Heart left ventricle (tissue), 16 donors: ENCODE measurements at regions of chr4 and their contacts with region 1.

Region 1: DNA sequence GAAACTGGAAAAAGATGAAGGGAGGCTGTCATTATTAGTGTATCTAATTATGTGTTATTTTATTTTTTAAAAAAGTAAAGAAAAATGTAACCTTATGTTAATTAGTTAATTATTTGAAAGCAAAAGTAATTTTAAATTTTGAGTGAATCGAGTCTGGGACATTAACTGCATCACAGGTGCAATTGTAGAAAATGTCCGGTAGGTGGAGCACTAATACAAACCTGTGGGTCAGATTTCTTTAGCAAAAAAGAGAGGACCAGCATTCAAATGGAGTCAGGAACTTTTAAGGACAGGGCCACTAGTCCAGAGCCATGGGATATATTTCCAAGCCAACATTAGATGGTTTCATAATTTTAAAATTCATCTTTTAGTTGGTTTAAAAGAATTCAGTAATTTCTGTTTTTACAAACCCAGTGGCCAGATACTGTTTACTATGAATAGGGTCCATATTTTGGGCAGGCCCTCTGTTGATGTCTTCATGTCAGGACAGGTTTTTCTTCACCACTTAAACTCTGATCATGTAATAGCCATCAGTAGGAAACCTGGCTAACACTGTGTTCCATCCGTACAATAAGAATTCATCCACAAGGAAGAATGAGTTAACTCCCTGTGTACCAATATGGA is 27.2 kb downstream of the BST1 start:
- DNase-seq: peak in 1 of 5 donors; percentile 13
- ATAC-seq: peak in 3 of 4 donors; percentile 36 to 53 (median 51)
- H3K4me3 ChIP-seq: no peak overlapping the region
- H3K27ac ChIP-seq: no peak overlapping the region
- H3K4me1 ChIP-seq: peaks cover 0 to 4% (median 0%) of the 10 kb centered on the region in 12 donors
- H3K27me3 ChIP-seq: no peaks in the 10 kb centered on the region
- CTCF ChIP-seq: peak; percentile 79 to 93 (median 87)
- POLR2A ChIP-seq: no peak

Region 2: DNA sequence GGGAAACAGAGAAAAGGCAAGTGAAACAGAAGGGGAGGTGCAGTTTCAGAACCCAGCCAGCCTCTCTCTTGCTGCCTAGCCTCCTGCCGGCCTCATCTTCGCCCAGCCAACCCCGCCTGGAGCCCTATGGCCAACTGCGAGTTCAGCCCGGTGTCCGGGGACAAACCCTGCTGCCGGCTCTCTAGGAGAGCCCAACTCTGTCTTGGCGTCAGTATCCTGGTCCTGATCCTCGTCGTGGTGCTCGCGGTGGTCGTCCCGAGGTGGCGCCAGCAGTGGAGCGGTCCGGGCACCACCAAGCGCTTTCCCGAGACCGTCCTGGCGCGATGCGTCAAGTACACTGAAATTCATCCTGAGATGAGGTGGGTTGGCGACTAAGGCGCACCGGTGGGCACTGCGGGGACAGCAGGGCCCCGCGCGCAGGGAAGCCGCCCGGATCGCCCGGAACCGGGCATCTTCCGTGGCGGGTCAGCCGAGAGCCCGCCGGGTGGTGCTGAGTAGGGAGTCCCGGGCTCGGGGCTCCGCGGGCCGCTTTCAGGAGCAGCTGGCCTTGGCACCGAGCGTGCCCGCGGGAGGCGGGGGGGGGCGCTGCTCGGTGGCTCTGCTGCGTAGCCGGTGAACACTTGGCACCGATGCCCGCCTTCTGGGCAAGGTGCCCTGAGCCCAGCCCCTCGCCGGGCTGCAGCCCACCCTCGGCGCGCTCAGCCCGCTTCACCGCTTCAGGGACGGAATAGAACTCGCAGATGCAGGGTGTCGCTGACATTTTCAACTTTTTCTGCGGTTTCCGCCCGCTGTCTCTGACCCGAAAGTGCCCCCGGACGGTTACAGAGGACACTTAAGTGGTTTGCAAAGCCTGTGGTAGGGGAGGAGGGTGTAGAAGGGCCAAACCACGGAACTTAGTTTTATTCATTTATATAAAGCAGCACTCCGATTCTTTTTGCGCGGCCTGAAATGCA is 48.5 kb after region 1 on chr4 and contains the start of gene CD38:
- intact Hi-C with region 1: loop called in 1 of 10 experiments (anchors 2 kb)
- DNase-seq: peak; percentile 25 to 79 (median 46)
- ATAC-seq: peak in 3 of 4 donors; percentile 66 to 80 (median 78)
- H3K4me3 ChIP-seq: peak within 1 kb of the TSS; percentile 54 to 90 (median 62)
- H3K27ac ChIP-seq: peak within 1 kb of the TSS; percentile 17 to 79 (median 62)
- H3K4me1 ChIP-seq: peaks cover 0 to 40% (median 7%) of the 10 kb centered on the region in 12 donors
- H3K27me3 ChIP-seq: no peaks in the 10 kb centered on the region
- CTCF ChIP-seq: no peak
- POLR2A ChIP-seq: no peak
- total RNA-seq, gene CD38: 1.0 to 12.4 (median 3.0) TPM

Region 3: DNA sequence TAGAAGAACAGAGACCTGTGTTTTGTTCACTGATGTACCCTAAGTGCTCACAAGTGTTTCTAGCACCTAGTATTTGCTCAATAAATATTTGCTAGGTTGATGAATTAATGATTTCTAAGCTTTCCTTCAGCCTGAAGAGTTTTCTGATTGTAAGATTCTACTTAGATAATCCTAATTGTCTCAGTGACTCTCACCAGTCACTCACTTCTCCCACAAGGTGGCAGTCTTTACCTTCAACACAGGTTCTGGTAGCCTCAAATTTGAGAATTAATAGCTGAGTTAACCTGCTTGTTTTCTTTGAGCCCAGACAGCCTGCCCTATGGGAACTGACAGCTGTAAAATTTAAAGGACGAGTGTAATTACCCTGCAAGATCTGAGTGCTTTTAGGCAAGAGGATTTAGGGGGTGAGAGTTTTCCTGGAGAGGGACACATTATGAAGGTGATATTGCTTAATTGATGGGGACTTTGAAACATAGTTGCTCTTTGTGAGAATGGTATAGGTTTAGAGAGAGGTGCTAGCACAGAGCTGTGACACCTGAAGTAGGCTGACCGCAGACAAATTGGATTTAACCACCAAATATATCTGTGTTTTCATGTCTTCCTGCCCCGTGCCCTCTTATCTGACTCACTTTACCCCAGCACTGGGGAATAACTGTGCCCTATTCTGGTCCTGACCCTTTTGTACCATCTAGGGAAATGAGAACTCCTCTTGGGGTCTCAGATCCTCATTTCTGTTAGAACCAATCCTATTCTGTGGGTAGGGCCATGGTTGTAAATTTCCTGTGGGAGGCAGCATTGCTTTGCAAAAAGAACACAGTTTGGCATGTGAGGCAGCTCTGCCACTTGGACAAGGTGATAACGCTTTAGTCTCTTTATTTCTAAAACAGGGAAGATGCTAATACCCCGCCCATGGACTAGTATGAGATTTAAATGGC is 75.8 kb after region 1 on chr4:
- intact Hi-C with region 1: loop called in 2 of 10 experiments (anchors 2 to 5 kb)
- DNase-seq: no peak
- ATAC-seq: peak in 3 of 4 donors; percentile 20 to 79 (median 64)
- H3K4me3 ChIP-seq: no peak overlapping the region
- H3K27ac ChIP-seq: no peak overlapping the region
- H3K4me1 ChIP-seq: peaks cover 0 to 34% (median 0%) of the 10 kb centered on the region in 12 donors
- H3K27me3 ChIP-seq: no peaks in the 10 kb centered on the region
- CTCF ChIP-seq: peak; percentile 58 to 75 (median 68)
- POLR2A ChIP-seq: no peak

Region 4: DNA sequence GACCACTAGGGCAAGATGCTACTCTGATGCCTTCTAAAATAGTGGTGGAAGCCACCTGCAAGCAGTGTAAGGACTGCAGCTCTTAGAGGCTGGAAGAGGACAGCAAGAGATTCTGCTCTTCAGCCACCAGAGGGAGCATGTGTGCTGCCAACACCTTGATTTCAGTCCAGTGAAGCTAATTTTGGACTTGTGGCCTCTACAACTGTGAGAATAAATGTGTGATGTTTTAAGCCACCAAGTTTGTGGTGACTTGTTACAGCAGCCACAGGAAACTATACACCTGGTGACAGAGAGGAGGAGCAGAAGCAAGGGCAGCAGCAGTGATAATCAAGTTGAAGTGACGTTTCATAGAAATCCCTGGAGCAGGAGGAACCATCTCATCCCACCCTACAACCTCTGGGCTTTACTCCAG is 152.7 kb after region 1 on chr4:
- intact Hi-C with region 1: loop called in 2 of 10 experiments (anchors 10 kb)
- DNase-seq: peak in 4 of 5 donors; percentile 39 to 53 (median 42)
- ATAC-seq: peak; percentile 73 to 89 (median 85)
- H3K4me3 ChIP-seq: no peak overlapping the region
- H3K27ac ChIP-seq: no peak overlapping the region
- H3K4me1 ChIP-seq: peaks cover 0 to 3% (median 0%) of the 10 kb centered on the region in 12 donors
- H3K27me3 ChIP-seq: no peaks in the 10 kb centered on the region
- CTCF ChIP-seq: peak; percentile 74 to 92 (median 88)
- POLR2A ChIP-seq: no peak

Region 5: GRCh38 chr4:15956179-15956850 is 226.3 kb after region 1 on chr4:
- intact Hi-C with region 1: loop called (anchors 1 to 5 kb)
- DNase-seq: peak; percentile 60 to 83 (median 72)
- ATAC-seq: peak in 3 of 4 donors; percentile 85 to 92 (median 86)
- H3K4me3 ChIP-seq: no peak overlapping the region
- H3K27ac ChIP-seq: no peak overlapping the region
- H3K4me1 ChIP-seq: peaks cover 0 to 4% (median 0%) of the 10 kb centered on the region in 12 donors
- H3K27me3 ChIP-seq: no peaks in the 10 kb centered on the region
- CTCF ChIP-seq: peak; percentile 82 to 93 (median 86)
- POLR2A ChIP-seq: no peak

Region 6: GRCh38 chr4:16001484-16001858 is 271.4 kb after region 1 on chr4:
- intact Hi-C with region 1: loop called in 7 of 10 experiments (anchors 5 to 10 kb)
- DNase-seq: peak in 4 of 5 donors; percentile 45 to 64 (median 60)
- ATAC-seq: peak; percentile 70 to 97 (median 92)
- H3K4me3 ChIP-seq: no peak overlapping the region
- H3K27ac ChIP-seq: no peak overlapping the region
- H3K4me1 ChIP-seq: peaks cover 0 to 13% (median 0%) of the 10 kb centered on the region in 12 donors
- H3K27me3 ChIP-seq: no peaks in the 10 kb centered on the region
- CTCF ChIP-seq: peak; percentile 75 to 89 (median 82)
- POLR2A ChIP-seq: no peak